ENCODE measurements at regions of chr17 and their contacts with region 1.

Region 1: DNA sequence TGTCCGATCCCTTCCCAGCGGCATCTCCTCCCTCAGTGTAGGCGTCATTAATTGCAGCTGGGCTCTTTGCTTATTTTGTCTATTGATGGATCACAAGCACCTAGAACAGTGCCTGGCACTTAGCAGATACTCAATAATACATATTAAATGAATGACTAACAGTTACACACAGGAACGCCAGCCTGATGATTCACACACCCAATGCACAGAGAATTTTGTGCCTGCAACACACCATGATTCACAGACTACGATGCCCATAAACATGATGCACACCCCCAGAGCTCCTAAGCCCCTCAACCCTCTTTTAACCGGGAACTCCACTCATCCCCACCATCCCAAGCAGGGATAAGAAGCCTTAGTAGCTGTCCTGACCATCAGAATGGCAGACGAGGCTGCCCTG is 66.6 kb upstream of the TMEM97 start:
- DNase-seq: no peak
- H3K4me3 ChIP-seq: no peak overlapping the region
- H3K27ac ChIP-seq: no peak overlapping the region
- H3K4me1 ChIP-seq: no peaks in the 10 kb centered on the region
- H3K27me3 ChIP-seq: no peaks in the 10 kb centered on the region
- CTCF ChIP-seq: no peak
- POLR2A ChIP-seq: no peak

Region 2: GRCh38 chr17:27805520-27806146 is 446.8 kb before region 1 on chr17:
- intact Hi-C with region 1: loop called (anchors 5 kb)
- DNase-seq: peak; percentile 83 to 88
- H3K4me3 ChIP-seq: no peak overlapping the region
- H3K27ac ChIP-seq: no peak overlapping the region
- H3K4me1 ChIP-seq: peaks cover 0 to 5% of the 10 kb centered on the region in 2 donors
- H3K27me3 ChIP-seq: no peaks in the 10 kb centered on the region
- CTCF ChIP-seq: peak; percentile 62 to 92 (median 84)
- POLR2A ChIP-seq: no peak

Region 3: GRCh38 chr17:27892866-27893769 is 359.3 kb before region 1 on chr17 and contains the start of gene LYRM9:
- intact Hi-C with region 1: loop called (anchors 10 kb)
- DNase-seq: peak; percentile 91
- H3K4me3 ChIP-seq: peak within 1 kb of the TSS; percentile 41 to 66 (median 57)
- H3K27ac ChIP-seq: peak within 1 kb of the TSS; percentile 79 to 85 (median 84)
- H3K4me1 ChIP-seq: peaks cover 29 to 37% of the 10 kb centered on the region in 2 donors
- H3K27me3 ChIP-seq: no peaks in the 10 kb centered on the region
- CTCF ChIP-seq: peak; percentile 68 to 98 (median 90)
- POLR2A ChIP-seq: peak in 1 of 2 donors; percentile 86
- total RNA-seq, gene LYRM9: 25.5 to 52.7 (median 46.4) TPM

Region 4: DNA sequence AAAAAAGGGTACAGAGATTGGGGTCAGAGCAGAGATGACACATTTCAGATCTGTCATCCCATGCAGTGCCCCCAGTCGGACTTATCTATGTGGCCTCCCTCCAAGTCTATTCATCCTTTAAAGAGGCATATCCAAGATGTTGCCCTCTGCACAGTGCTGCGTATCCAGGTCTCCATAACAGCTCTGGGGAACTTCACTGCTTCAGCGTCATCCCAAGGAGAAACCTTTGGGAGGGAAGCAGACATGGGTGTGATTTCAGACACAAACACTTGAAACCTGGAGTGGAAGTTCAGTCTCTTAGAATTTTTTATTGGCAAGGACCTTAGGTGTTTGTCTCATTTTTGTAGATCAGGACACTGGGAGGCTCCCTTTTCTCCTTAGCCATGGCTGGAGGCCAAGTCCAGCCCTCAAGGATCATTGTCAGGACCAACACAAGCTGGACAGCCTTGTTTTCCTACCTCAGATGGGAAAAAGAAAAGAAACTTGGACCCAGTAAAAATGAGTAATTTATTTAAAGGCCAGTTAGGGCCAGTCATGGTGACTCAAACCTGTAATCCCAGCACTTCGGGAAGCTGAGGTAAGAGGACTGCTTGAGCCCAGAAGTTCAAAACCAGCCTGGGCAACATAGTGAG is 233.9 kb before region 1 on chr17:
- intact Hi-C with region 1: loop called (anchors 10 kb)
- DNase-seq: peak; percentile 96 to 98
- H3K4me3 ChIP-seq: no peak overlapping the region
- H3K27ac ChIP-seq: peak overlapping the region; percentile 71 to 89 (median 87)
- H3K4me1 ChIP-seq: peaks cover 0 to 13% of the 10 kb centered on the region in 2 donors
- H3K27me3 ChIP-seq: no peaks in the 10 kb centered on the region
- CTCF ChIP-seq: no peak
- POLR2A ChIP-seq: no peak

Region 5: DNA sequence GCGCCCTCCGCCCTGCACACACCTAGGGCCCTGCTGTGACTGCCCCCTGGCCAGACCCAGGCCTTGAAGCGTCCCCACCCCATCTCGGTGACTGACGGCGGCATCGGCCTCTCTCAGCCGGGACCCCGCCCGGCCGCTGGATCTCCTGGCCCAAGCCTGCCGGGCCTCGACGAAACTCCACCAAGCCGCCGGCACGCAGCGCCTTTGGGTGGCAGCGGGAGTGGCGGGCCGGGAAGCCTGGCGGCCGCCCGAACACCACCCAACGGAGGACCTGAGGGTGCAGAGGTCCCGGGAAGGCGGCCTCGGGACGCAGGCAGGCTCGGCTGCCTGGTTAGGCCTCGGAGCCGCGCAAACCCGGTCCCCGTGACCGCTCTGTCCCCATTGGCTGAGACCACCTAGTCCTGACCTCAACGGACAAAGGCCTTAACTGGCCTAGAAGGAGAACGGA is 54.5 kb after region 1 on chr17:
- intact Hi-C with region 1: no loop called
- DNase-seq: peak in 1 of 2 donors; percentile 6
- H3K4me3 ChIP-seq: no peak overlapping the region
- H3K27ac ChIP-seq: no peak overlapping the region
- H3K4me1 ChIP-seq: no peaks in the 10 kb centered on the region
- H3K27me3 ChIP-seq: peaks cover 5% of the 10 kb centered on the region
- CTCF ChIP-seq: no peak
- POLR2A ChIP-seq: no peak

Measured in thyroid gland (tissue), 4 donors.